AG04450 (cell line): ENCODE measurements at regions of chrX and their contacts with region 1.

Region 1: GRCh38 chrX:30504309-30504708 is 73.3 kb downstream of the TASL start:
- DNase-seq: no peak
- H3K4me3 ChIP-seq: no peak overlapping the region
- H3K27ac ChIP-seq: no peak overlapping the region
- H3K27me3 ChIP-seq: no peaks in the 10 kb centered on the region
- CTCF ChIP-seq: peak; percentile 40

Region 2: DNA sequence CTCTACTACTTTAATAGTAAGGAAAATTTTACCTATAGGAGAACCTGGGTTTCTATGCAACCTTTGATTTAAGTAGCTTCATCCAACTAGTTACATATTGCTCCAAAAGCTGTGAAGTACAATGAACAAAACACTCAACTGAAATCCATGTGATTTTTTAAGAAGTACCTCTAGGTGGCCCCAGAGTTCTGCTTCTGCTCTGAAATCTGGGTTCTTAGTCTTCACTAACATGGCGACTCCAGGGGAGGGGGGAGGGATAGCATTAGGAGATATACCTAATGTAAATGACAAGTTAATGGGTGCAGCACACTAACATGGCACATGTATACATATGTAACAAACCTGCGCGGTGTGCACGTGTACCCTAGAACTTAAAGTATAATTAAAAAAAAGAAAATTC is 362.3 kb before region 1 on chrX:
- CTCF ChIA-PET with region 1: interaction called, 21 read pairs
- POLR2A ChIA-PET with region 1: no interaction called
- DNase-seq: peak; percentile 13
- H3K4me3 ChIP-seq: no peak overlapping the region
- H3K27ac ChIP-seq: no peak overlapping the region
- H3K27me3 ChIP-seq: no peaks in the 10 kb centered on the region
- CTCF ChIP-seq: peak; percentile 48

Region 3: GRCh38 chrX:30414144-30414543 is 90.2 kb before region 1 on chrX:
- CTCF ChIA-PET with region 1: interaction called, 10 read pairs
- POLR2A ChIA-PET with region 1: no interaction called
- DNase-seq: no peak
- H3K4me3 ChIP-seq: no peak overlapping the region
- H3K27ac ChIP-seq: no peak overlapping the region
- H3K27me3 ChIP-seq: no peaks in the 10 kb centered on the region
- CTCF ChIP-seq: no peak

Region 4: DNA sequence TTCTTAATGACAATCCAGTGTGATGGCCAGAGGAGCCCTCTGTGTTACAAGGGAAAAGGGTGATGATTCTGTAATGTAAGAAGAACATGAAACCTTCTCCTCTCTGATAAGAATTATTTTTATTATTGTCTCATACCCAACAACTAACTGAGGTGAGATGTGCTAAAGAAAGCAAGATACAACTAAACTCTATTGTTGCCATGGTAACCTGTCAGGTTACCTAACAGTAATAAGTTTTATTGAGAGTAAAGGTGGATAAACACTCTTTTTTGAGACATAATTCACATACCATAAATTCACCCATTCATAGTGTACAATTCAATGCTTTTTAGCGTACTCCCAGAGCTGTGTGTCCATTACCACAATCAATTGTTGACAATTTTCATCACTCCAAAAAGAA is 62.8 kb before region 1 on chrX:
- CTCF ChIA-PET with region 1: no interaction called
- POLR2A ChIA-PET with region 1: no interaction called
- DNase-seq: no peak
- H3K4me3 ChIP-seq: no peak overlapping the region
- H3K27ac ChIP-seq: no peak overlapping the region
- H3K27me3 ChIP-seq: no peaks in the 10 kb centered on the region
- CTCF ChIP-seq: no peak

Region 5: GRCh38 chrX:30748393-30748841 is 244.1 kb after region 1 on chrX:
- CTCF ChIA-PET with region 1: no interaction called
- POLR2A ChIA-PET with region 1: no interaction called
- DNase-seq: no peak
- H3K4me3 ChIP-seq: no peak overlapping the region
- H3K27ac ChIP-seq: no peak overlapping the region
- H3K27me3 ChIP-seq: no peaks in the 10 kb centered on the region
- CTCF ChIP-seq: no peak